IMR-90 (cell line): ENCODE measurements at regions of chr18 and their contacts with region 1.

Region 1: GRCh38 chr18:7566567-7567473 is at the start of gene PTPRM:
- DNase-seq: peak; percentile 78
- ATAC-seq: peak; percentile 89
- H3K4me3 ChIP-seq: peak within 1 kb of the TSS; percentile 96
- H3K27ac ChIP-seq: peak within 1 kb of the TSS; percentile 88
- H3K4me1 ChIP-seq: peaks cover 6% of the 10 kb centered on the region
- H3K27me3 ChIP-seq: no peaks in the 10 kb centered on the region
- CTCF ChIP-seq: peak; percentile 73
- POLR2A ChIP-seq: peak; percentile 70
- RAD21 ChIP-seq: peak; percentile 56
- total RNA-seq, gene PTPRM: 23.6 and 28.3 TPM in 2 replicates

Region 2: GRCh38 chr18:7272311-7273049 is 294.3 kb before region 1 on chr18:
- CTCF ChIA-PET with region 1: no interaction called
- POLR2A ChIA-PET with region 1: no interaction called
- dilution Hi-C with region 1: no loop called
- in situ Hi-C with region 1: no loop called
- intact Hi-C with region 1: loop called (anchors 2 kb)
- DNase-seq: peak; percentile 61
- ATAC-seq: peak; percentile 87
- H3K4me3 ChIP-seq: no peak overlapping the region
- H3K27ac ChIP-seq: no peak overlapping the region
- H3K4me1 ChIP-seq: peaks cover 4% of the 10 kb centered on the region; the same call in 1 of the 2 replicates
- H3K27me3 ChIP-seq: no peaks in the 10 kb centered on the region; the same call in 1 of the 2 replicates
- CTCF ChIP-seq: peak; percentile 57
- POLR2A ChIP-seq: no peak
- RAD21 ChIP-seq: peak; percentile 67

Region 3: DNA sequence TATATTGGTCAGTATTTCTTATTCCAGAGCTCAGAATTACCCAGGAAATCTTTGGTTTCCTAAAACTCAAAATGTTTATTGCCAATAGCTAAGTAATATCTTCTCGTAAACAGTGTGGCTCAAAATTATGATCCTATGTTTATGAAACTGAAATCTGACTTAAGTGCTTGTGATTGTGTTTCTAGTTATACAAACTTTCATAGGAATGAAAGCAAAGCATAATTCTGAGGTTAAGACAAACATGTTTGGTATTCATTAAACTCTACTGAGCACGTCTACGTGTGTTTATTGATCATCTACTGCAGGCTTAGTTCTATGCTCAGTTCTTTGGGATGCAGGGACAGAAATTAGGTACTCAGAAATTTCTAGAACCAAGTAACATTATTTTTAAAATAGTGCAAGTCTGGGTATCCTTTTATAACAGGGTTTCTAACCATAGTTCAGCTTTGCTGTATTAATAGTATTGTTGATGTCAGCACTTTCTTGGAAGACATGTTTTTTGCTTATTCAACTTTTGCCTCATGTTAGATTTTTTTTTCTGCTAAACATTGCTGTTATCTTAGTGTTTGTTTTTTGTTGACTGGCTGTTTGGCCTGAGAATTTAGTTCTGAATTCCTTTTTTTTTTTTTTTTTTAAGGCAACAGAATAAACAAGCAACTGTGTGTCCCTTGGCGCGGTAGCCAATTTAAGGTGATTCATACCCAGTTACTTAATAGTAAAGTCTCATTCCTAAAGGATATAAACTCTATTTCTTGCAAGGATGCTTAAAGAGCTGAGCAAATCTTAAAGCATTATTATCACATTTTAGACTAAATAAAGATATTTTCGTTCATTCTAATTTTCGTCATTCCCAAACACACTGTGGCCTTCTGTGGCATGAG is 31.6 kb after region 1 on chr18:
- CTCF ChIA-PET with region 1: interaction called, 5 read pairs
- POLR2A ChIA-PET with region 1: no interaction called
- dilution Hi-C with region 1: no loop called
- in situ Hi-C with region 1: no loop called
- intact Hi-C with region 1: loop called (anchors 2 kb)
- DNase-seq: peak; percentile 66
- ATAC-seq: peak; percentile 65
- H3K4me3 ChIP-seq: no peak overlapping the region
- H3K27ac ChIP-seq: no peak overlapping the region
- H3K4me1 ChIP-seq: peaks cover 20% of the 10 kb centered on the region
- H3K27me3 ChIP-seq: no peaks in the 10 kb centered on the region
- CTCF ChIP-seq: no peak
- POLR2A ChIP-seq: no peak
- RAD21 ChIP-seq: no peak

Region 4: GRCh38 chr18:7686278-7686677 is 119.5 kb after region 1 on chr18:
- CTCF ChIA-PET with region 1: no interaction called
- POLR2A ChIA-PET with region 1: no interaction called
- dilution Hi-C with region 1: no loop called
- in situ Hi-C with region 1: no loop called
- intact Hi-C with region 1: no loop called
- DNase-seq: no peak
- ATAC-seq: no peak
- H3K4me3 ChIP-seq: no peak overlapping the region
- H3K27ac ChIP-seq: no peak overlapping the region
- H3K4me1 ChIP-seq: no peaks in the 10 kb centered on the region
- H3K27me3 ChIP-seq: no peaks in the 10 kb centered on the region
- CTCF ChIP-seq: no peak
- POLR2A ChIP-seq: no peak
- RAD21 ChIP-seq: no peak

Region 5: DNA sequence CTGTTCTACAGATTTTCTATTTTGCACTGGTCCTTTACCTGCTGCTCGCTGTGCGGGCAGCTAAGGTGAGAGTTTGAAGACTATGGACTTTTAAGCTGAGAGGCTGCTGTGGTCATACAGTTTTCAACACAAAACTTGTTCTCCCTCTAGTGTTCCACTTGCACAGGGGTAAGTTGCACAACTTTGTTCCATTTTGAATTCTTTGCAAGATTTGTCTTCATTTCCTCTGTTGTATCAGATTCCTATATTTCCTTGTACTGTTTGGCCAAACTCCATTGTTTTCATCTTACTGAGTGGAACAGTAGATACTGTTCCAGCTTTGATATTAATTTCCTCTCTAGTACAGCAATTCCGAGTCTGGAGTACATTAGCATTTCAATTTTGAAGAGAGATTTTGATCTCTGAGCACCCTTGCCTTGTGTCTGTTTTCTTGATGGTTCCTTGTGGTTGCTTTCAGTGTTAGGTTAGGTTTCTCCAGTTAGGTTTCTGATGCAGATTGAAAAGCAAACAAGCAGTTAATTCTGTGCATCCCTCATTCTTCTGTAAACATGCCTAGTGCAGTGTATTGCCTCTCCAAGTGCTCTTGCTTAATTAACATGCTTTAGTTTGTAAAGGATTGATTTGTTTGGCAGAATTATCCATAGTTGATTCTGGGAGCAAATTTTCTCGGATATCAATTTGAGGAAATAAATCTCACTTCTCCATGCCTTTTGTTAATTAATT is 189.1 kb after region 1 on chr18:
- CTCF ChIA-PET with region 1: interaction called, 4 read pairs
- POLR2A ChIA-PET with region 1: no interaction called
- dilution Hi-C with region 1: no loop called
- in situ Hi-C with region 1: no loop called
- intact Hi-C with region 1: loop called (anchors 2 kb)
- DNase-seq: peak; percentile 31
- ATAC-seq: peak; percentile 40
- H3K4me3 ChIP-seq: no peak overlapping the region
- H3K27ac ChIP-seq: no peak overlapping the region
- H3K4me1 ChIP-seq: peaks cover 8% of the 10 kb centered on the region
- H3K27me3 ChIP-seq: no peaks in the 10 kb centered on the region
- CTCF ChIP-seq: no peak; the same call in 1 of the 2 replicates
- POLR2A ChIP-seq: no peak
- RAD21 ChIP-seq: 0 out of 2 replicates have a peak, but pooled peaks have one; percentile 6

Region 6: DNA sequence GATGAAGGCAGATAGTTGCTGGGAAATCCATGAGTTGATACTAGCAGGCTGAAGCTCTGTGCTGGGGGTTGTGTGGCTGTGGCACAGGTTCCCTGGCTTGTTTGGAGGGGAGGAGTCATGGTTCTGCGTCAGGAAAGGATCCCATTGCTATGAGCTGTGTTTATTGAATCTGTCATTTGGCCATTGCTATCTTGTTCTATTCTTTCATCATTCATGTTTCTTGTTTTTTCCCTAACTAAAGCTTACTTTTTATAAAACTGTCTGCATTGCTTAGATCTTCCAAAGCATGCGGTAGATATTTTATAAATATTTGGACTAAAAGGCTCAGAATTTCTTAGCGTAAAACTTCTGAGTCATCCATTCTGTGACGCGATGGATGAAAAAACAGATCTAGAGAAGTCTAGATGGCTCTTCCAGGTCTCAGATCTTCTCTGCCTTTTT is 335.6 kb after region 1 on chr18:
- CTCF ChIA-PET with region 1: no interaction called
- POLR2A ChIA-PET with region 1: no interaction called
- dilution Hi-C with region 1: no loop called
- in situ Hi-C with region 1: no loop called
- intact Hi-C with region 1: loop called (anchors 5 kb)
- DNase-seq: peak; percentile 99
- ATAC-seq: peak; percentile 92
- H3K4me3 ChIP-seq: no peak overlapping the region
- H3K27ac ChIP-seq: peak overlapping the region; percentile 35; the same call in 1 of the 2 replicates
- H3K4me1 ChIP-seq: peaks cover 20% of the 10 kb centered on the region
- H3K27me3 ChIP-seq: no peaks in the 10 kb centered on the region
- CTCF ChIP-seq: no peak
- POLR2A ChIP-seq: peak; percentile 49; the same call in 1 of the 2 replicates
- RAD21 ChIP-seq: peak; percentile 29; the same call in 1 of the 2 replicates

Region 7: DNA sequence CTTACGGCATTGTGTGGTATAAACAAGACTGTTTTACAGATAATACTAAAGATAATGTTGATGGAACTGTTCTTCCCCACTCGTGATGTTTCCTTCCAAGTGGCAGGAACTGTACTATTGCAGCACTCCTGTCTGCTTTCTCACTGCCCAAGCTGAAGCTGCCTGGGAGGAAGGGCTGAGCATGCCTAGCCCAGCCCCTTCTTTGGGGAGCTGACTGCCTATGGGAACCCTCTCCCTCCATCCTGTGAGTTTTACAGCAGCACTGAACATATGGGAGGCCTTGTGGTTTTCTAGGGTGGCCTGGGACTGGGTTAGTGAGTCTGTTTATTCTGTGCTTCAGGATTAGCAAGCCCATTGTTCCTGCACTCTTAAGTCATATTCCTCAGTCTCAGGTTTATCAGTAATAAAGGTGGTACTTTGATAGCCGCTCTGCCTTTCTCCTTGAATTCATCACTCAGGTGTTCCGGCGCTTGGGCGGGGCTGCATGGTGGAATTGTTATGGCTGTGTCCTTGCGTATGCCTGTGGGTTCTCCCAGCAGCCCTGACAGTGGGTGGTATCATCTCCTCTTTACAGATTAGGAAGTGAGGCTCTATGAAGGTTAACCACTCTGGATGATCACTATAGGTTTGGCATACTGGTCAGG is 380.0 kb after region 1 on chr18:
- CTCF ChIA-PET with region 1: interaction called, 3 read pairs
- POLR2A ChIA-PET with region 1: no interaction called
- dilution Hi-C with region 1: no loop called
- in situ Hi-C with region 1: no loop called
- intact Hi-C with region 1: loop called (anchors 5 kb)
- DNase-seq: peak; percentile 89
- ATAC-seq: peak; percentile 79
- H3K4me3 ChIP-seq: peak overlapping the region; percentile 45
- H3K27ac ChIP-seq: peak overlapping the region; percentile 80
- H3K4me1 ChIP-seq: peaks cover 10% of the 10 kb centered on the region
- H3K27me3 ChIP-seq: no peaks in the 10 kb centered on the region
- CTCF ChIP-seq: no peak
- POLR2A ChIP-seq: no peak
- RAD21 ChIP-seq: no peak

Region 8: GRCh38 chr18:8389391-8390340 is 822.8 kb after region 1 on chr18:
- CTCF ChIA-PET with region 1: interaction called, 3 read pairs
- POLR2A ChIA-PET with region 1: no interaction called
- dilution Hi-C with region 1: no loop called
- in situ Hi-C with region 1: no loop called
- intact Hi-C with region 1: loop called (anchors 5 kb)
- DNase-seq: peak; percentile 78
- ATAC-seq: peak; percentile 60; the same call in 1 of the 2 replicates
- H3K4me3 ChIP-seq: no peak overlapping the region
- H3K27ac ChIP-seq: no peak overlapping the region
- H3K4me1 ChIP-seq: peaks cover 2% of the 10 kb centered on the region; the same call in 1 of the 2 replicates
- H3K27me3 ChIP-seq: no peaks in the 10 kb centered on the region
- CTCF ChIP-seq: peak; percentile 78
- POLR2A ChIP-seq: no peak
- RAD21 ChIP-seq: peak; percentile 87